ENCODE measurements at regions of chr7 and their contacts with region 1.

Region 1: DNA sequence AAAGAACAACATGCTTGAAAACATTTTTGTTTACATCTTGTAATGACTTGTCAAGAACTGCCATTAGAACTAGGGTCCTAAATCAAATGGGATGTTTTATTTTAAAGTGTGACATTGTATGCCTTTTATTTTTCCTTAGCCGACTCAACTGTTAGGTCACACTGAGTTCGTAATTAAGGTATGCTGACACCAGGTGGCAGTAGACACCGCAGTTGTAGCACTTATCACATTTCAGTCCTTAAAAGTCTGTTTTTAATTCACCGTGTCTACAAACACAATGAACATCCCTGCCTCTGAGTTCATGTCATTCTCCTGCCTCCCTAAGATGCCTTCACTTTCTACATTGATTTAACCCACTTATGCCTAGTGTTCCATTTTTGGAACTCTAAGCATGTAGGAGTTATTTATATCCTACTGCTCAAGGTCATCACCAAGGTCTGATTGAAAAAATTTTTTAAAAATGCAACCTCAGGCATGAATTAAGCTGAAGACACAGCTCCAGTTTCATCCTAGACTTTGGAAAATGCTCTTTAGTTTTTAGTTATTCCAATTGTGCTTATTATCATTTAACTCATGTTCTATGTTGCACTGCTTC is 186.1 kb downstream of the BMPER start:
- DNase-seq: no peak
- H3K4me3 ChIP-seq: no peak overlapping the region
- H3K27ac ChIP-seq: no peak overlapping the region
- H3K4me1 ChIP-seq: no peaks in the 10 kb centered on the region
- H3K27me3 ChIP-seq: no peaks in the 10 kb centered on the region
- CTCF ChIP-seq: peak in 3 of 4 experiments; percentile 36 to 44 (median 43)
- POLR2A ChIP-seq: no peak

Region 2: GRCh38 chr7:33964417-33965182 is 126.8 kb before region 1 on chr7:
- intact Hi-C with region 1: no loop called
- DNase-seq: no peak
- H3K4me3 ChIP-seq: no peak overlapping the region
- H3K27ac ChIP-seq: no peak overlapping the region
- H3K4me1 ChIP-seq: no peaks in the 10 kb centered on the region
- H3K27me3 ChIP-seq: no peaks in the 10 kb centered on the region
- CTCF ChIP-seq: no peak
- POLR2A ChIP-seq: no peak

Region 3: GRCh38 chr7:34158368-34159155 is 67.1 kb after region 1 on chr7:
- intact Hi-C with region 1: loop called (anchors 5 kb)
- DNase-seq: peak; percentile 76
- H3K4me3 ChIP-seq: no peak overlapping the region
- H3K27ac ChIP-seq: peak overlapping the region; percentile 40 to 66
- H3K4me1 ChIP-seq: peaks cover 11% of the 10 kb centered on the region
- H3K27me3 ChIP-seq: no peaks in the 10 kb centered on the region
- CTCF ChIP-seq: peak in 2 of 4 experiments; percentile 35 to 36
- POLR2A ChIP-seq: no peak

Measured in prostate gland (tissue), 2 donors.